Naive thymus-derived CD4-positive, alpha-beta T cell (primary cell): ENCODE measurements at regions of chr14 and their contacts with region 1.

Region 1: GRCh38 chr14:64540208-64541157 is at the start of gene HSPA2:
- DNase-seq: peak; percentile 87 to 94 (median 91)
- ATAC-seq: peak; percentile 94
- H3K4me3 ChIP-seq: peak within 1 kb of the TSS; percentile 90
- H3K4me3 Mint-ChIP-seq: peak within 1 kb of the TSS; percentile 87 to 98 (median 94)
- H3K27ac ChIP-seq: peak within 1 kb of the TSS; percentile 53
- H3K27ac Mint-ChIP-seq: peak within 1 kb of the TSS; percentile 61 to 95 (median 81)
- H3K4me1 ChIP-seq: peaks cover 4 to 9% of the 10 kb centered on the region in 2 donors
- H3K4me1 Mint-ChIP-seq: peaks cover 21 to 44% (median 34%) of the 10 kb centered on the region in 7 donors
- H3K27me3 ChIP-seq: no peaks in the 10 kb centered on the region
- H3K27me3 Mint-ChIP-seq: peaks cover 0 to 54% (median 3%) of the 10 kb centered on the region in 5 donors
- total RNA-seq, gene HSPA2: 0.32 to 2.5 (median 0.76) TPM

Region 2: GRCh38 chr14:64338616-64339316 is 201.7 kb before region 1 on chr14:
- CTCF ChIA-PET with region 1: no interaction called
- POLR2A ChIA-PET with region 1: no interaction called
- intact Hi-C with region 1: loop called (anchors 1 kb)
- DNase-seq: peak; percentile 50 to 84 (median 79)
- ATAC-seq: peak; percentile 87
- H3K4me3 ChIP-seq: peak overlapping the region; percentile 57
- H3K4me3 Mint-ChIP-seq: peak overlapping the region; percentile 87 to 99 (median 92)
- H3K27ac ChIP-seq: peak overlapping the region; percentile 72
- H3K27ac Mint-ChIP-seq: peak overlapping the region; percentile 81 to 91 (median 86)
- H3K4me1 ChIP-seq: peaks cover 5 to 10% of the 10 kb centered on the region in 2 donors
- H3K4me1 Mint-ChIP-seq: peaks cover 6 to 36% (median 19%) of the 10 kb centered on the region in 7 donors
- H3K27me3 ChIP-seq: no peaks in the 10 kb centered on the region
- H3K27me3 Mint-ChIP-seq: no peaks in the 10 kb centered on the region

Region 3: GRCh38 chr14:64478634-64479250 is 61.7 kb before region 1 on chr14:
- CTCF ChIA-PET with region 1: no interaction called
- POLR2A ChIA-PET with region 1: no interaction called
- intact Hi-C with region 1: no loop called
- DNase-seq: peak in 5 of 9 donors; percentile 18 to 38 (median 32)
- ATAC-seq: peak; percentile 51
- H3K4me3 ChIP-seq: no peak overlapping the region
- H3K4me3 Mint-ChIP-seq: no peak overlapping the region
- H3K27ac ChIP-seq: no peak overlapping the region
- H3K27ac Mint-ChIP-seq: peak overlapping the region in 1 of 9 donors; percentile 55
- H3K4me1 ChIP-seq: no peaks in the 10 kb centered on the region
- H3K4me1 Mint-ChIP-seq: peaks cover 0 to 22% (median 9%) of the 10 kb centered on the region in 7 donors
- H3K27me3 ChIP-seq: no peaks in the 10 kb centered on the region
- H3K27me3 Mint-ChIP-seq: no peaks in the 10 kb centered on the region

Region 4: GRCh38 chr14:64636208-64636979 is 95.9 kb after region 1 on chr14:
- CTCF ChIA-PET with region 1: interaction called, 3 read pairs
- POLR2A ChIA-PET with region 1: interaction called, 3 read pairs
- intact Hi-C with region 1: loop called (anchors 1 to 2 kb)
- DNase-seq: peak; percentile 37 to 73 (median 61)
- ATAC-seq: peak; percentile 90
- H3K4me3 ChIP-seq: no peak overlapping the region
- H3K4me3 Mint-ChIP-seq: no peak overlapping the region
- H3K27ac ChIP-seq: no peak overlapping the region
- H3K27ac Mint-ChIP-seq: peak overlapping the region in 1 of 9 donors; percentile 20
- H3K4me1 ChIP-seq: no peaks in the 10 kb centered on the region
- H3K4me1 Mint-ChIP-seq: peaks cover 0 to 7% (median 0%) of the 10 kb centered on the region in 7 donors
- H3K27me3 ChIP-seq: no peaks in the 10 kb centered on the region
- H3K27me3 Mint-ChIP-seq: peaks cover 0 to 17% (median 5%) of the 10 kb centered on the region in 5 donors

Region 5: GRCh38 chr14:64880221-64881121 is 340.0 kb after region 1 on chr14:
- CTCF ChIA-PET with region 1: no interaction called
- POLR2A ChIA-PET with region 1: no interaction called
- intact Hi-C with region 1: loop called in 1 of 2 experiments (anchors 10 kb)
- DNase-seq: peak; percentile 29 to 68 (median 54)
- ATAC-seq: peak; percentile 85
- H3K4me3 ChIP-seq: peak overlapping the region; percentile 67
- H3K4me3 Mint-ChIP-seq: peak overlapping the region; percentile 85 to 92 (median 88)
- H3K27ac ChIP-seq: peak overlapping the region; percentile 20
- H3K27ac Mint-ChIP-seq: peak overlapping the region in 4 of 9 donors; percentile 14 to 59 (median 36)
- H3K4me1 ChIP-seq: peaks cover 0 to 4% of the 10 kb centered on the region in 2 donors
- H3K4me1 Mint-ChIP-seq: peaks cover 0 to 11% (median 8%) of the 10 kb centered on the region in 7 donors
- H3K27me3 ChIP-seq: peaks cover 0 to 7% of the 10 kb centered on the region in 2 donors
- H3K27me3 Mint-ChIP-seq: peaks cover 13 to 81% (median 19%) of the 10 kb centered on the region in 5 donors

Region 6: DNA sequence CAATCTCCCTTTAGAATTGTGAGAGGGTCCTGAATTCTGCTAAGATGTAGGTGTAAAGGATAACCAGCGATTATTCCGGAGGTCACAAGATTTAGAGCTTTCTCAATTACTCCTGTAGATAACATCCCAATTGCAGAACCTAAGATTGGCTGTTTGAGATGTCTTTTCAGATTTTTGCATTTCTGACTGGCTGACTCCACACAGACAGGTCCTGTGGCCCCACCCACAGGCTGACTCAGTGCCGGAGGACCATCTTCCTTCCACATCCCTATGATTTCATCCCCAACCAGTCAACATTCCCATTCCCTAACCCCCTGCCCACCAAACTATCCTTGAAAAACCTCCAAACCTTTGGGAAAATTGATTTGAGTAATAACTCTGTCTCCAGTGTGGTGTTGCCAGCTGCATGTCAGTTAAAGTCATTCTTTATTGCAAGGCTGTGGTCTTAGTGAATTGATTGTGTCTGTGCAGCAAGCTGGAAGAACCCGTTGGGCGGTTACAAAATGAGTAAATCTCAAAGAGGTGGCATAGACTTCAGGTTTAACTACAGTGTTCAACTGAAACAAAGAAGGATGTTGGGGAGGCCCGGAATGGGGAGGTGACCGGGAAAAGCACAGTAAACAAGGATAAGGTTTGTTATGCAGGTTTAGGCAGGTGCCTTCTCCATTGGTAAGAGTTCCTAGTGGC is 456.8 kb after region 1 on chr14:
- CTCF ChIA-PET with region 1: no interaction called
- POLR2A ChIA-PET with region 1: no interaction called
- intact Hi-C with region 1: no loop called
- DNase-seq: no peak
- ATAC-seq: peak; percentile 49
- H3K4me3 ChIP-seq: no peak overlapping the region
- H3K4me3 Mint-ChIP-seq: no peak overlapping the region
- H3K27ac ChIP-seq: no peak overlapping the region
- H3K27ac Mint-ChIP-seq: no peak overlapping the region
- H3K4me1 ChIP-seq: no peaks in the 10 kb centered on the region
- H3K4me1 Mint-ChIP-seq: peaks cover 5 to 20% (median 12%) of the 10 kb centered on the region in 7 donors
- H3K27me3 ChIP-seq: no peaks in the 10 kb centered on the region
- H3K27me3 Mint-ChIP-seq: no peaks in the 10 kb centered on the region

Region 7: DNA sequence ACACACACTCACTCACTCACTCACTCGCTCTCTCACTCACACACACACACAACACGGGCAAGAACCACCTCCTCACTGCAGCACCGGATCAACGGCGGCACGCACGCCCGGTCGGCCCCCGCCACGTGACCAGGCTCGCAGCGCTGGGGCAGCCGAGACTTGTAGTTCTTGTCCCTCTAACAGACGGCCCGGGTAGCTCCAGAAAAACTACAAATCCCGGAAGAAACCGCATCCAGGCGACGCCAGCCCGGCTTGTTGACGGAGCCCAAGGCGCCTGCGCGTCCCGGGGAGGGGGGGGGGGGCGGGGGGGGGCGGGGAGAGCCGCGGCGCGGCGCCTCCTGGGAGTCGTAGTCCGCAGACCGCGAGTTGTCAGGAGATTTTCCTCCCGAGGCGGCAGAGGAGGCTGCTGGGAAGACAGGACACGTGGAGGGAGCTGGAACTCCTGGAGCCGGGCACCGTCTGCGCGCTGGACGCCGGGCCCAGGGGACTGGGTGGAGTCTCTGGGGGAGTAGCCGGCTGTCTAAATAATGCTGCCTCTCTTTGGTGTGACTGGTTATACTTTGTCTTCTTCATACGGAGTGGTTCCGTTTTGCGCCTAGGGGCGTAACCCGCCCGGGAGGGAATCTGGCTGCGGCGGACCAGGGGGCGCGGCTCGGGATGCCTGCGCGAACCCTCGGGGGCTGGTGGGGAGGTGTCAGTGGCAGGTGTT is 562.1 kb after region 1 on chr14 and contains the start of gene MAX:
- CTCF ChIA-PET with region 1: no interaction called
- POLR2A ChIA-PET with region 1: no interaction called
- intact Hi-C with region 1: loop called in 1 of 2 experiments (anchors 1 kb)
- DNase-seq: peak; percentile 88 to 100 (median 99)
- ATAC-seq: peak; percentile 95
- H3K4me3 ChIP-seq: peak within 1 kb of the TSS; percentile 96
- H3K4me3 Mint-ChIP-seq: peak within 1 kb of the TSS; percentile 87 to 97 (median 91)
- H3K27ac ChIP-seq: peak within 1 kb of the TSS; percentile 100
- H3K27ac Mint-ChIP-seq: peak within 1 kb of the TSS; percentile 91 to 99 (median 94)
- H3K4me1 ChIP-seq: peaks cover 17 to 34% of the 10 kb centered on the region in 2 donors
- H3K4me1 Mint-ChIP-seq: peaks cover 28 to 43% (median 42%) of the 10 kb centered on the region in 7 donors
- H3K27me3 ChIP-seq: no peaks in the 10 kb centered on the region
- H3K27me3 Mint-ChIP-seq: peaks cover 0 to 12% (median 0%) of the 10 kb centered on the region in 5 donors
- total RNA-seq, gene MAX: 164 to 236 (median 202) TPM